Thyroid gland (tissue), 4 donors: ENCODE measurements at regions of chr6 and their contacts with region 1.

Region 1: GRCh38 chr6:167485186-167485978 is 160.5 kb downstream of the TTLL2 start:
- DNase-seq: peak; percentile 15 to 16
- H3K4me3 ChIP-seq: no peak overlapping the region
- H3K27ac ChIP-seq: no peak overlapping the region
- H3K4me1 ChIP-seq: no peaks in the 10 kb centered on the region
- H3K27me3 ChIP-seq: no peaks in the 10 kb centered on the region
- CTCF ChIP-seq: peak in 4 of 6 experiments; percentile 35 to 62 (median 56)
- POLR2A ChIP-seq: no peak

Region 2: GRCh38 chr6:167722634-167723309 is 237.4 kb after region 1 on chr6:
- intact Hi-C with region 1: no loop called
- DNase-seq: no peak
- H3K4me3 ChIP-seq: no peak overlapping the region
- H3K27ac ChIP-seq: no peak overlapping the region
- H3K4me1 ChIP-seq: no peaks in the 10 kb centered on the region
- H3K27me3 ChIP-seq: no peaks in the 10 kb centered on the region
- CTCF ChIP-seq: no peak
- POLR2A ChIP-seq: no peak

Region 3: GRCh38 chr6:167898673-167899311 is 413.4 kb after region 1 on chr6:
- intact Hi-C with region 1: loop called (anchors 5 kb)
- DNase-seq: no peak
- H3K4me3 ChIP-seq: no peak overlapping the region
- H3K27ac ChIP-seq: no peak overlapping the region
- H3K4me1 ChIP-seq: no peaks in the 10 kb centered on the region
- H3K27me3 ChIP-seq: no peaks in the 10 kb centered on the region
- CTCF ChIP-seq: peak; percentile 41 to 85 (median 67)
- POLR2A ChIP-seq: no peak